Left cardiac atrium (tissue), 4 donors: ENCODE measurements at regions of chr4 and their contacts with region 1.

Region 1: DNA sequence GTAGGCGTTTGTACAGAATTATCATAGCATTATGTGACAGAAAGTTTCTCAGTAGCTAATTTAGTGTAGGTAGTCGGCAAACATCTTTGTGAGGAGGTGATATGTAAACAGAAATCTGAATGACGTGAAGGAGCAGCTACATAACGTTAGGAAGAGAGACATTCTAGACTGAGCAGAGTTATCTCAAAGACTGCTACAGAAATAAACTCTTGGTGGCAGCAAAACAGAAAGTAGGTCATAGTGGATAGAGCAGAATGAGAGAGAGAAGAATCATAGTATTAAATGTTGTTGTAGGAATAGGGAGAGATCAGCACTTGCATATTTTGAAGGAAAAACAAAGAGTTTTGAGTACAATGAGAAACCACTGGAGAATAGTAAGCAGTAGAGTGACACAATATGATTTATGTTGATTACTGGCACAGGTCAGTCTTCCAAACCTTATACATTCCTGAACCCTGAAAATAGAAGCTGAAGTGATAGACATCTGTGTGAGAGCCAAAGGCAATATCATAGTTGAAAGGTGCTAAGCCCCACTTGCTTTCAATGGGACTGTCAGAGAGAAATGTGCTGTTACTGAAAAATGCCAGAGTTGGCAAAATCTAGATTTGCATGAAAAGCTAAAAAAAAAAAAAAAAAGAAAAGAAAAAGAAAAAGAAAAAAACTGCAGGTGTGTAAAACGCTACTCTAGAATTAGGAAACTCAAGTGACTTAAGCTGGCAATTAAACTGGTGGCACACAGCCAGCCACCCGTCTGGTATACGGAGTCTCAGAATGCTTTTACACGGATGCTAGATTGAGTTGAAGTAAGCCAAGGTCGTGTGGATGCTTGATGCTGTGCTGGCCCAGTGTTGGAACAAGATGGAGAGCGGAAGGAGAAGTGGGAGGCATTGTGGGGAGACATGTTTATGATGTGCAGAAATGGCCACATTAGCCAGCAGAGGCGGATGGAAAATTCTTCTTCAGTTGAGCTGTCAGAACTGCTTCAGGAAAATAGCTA is 750.2 kb upstream of the HS3ST1 start:
- DNase-seq: peak; percentile 25
- ATAC-seq: peak; percentile 56 to 86

Region 2: GRCh38 chr4:11912886-11913285 is 266.0 kb before region 1 on chr4:
- intact Hi-C with region 1: no loop called
- DNase-seq: no peak
- ATAC-seq: peak in 1 of 2 donors; percentile 90

Region 3: GRCh38 chr4:12399781-12400180 is 220.9 kb after region 1 on chr4:
- intact Hi-C with region 1: loop called in 1 of 2 experiments (anchors 10 kb)
- DNase-seq: no peak
- ATAC-seq: no peak

Region 4: GRCh38 chr4:12411072-12411471 is 232.2 kb after region 1 on chr4:
- intact Hi-C with region 1: no loop called
- DNase-seq: no peak
- ATAC-seq: peak in 1 of 2 donors; percentile 63